ENCODE measurements at regions of chr2 and their contacts with region 1.

Region 1: DNA sequence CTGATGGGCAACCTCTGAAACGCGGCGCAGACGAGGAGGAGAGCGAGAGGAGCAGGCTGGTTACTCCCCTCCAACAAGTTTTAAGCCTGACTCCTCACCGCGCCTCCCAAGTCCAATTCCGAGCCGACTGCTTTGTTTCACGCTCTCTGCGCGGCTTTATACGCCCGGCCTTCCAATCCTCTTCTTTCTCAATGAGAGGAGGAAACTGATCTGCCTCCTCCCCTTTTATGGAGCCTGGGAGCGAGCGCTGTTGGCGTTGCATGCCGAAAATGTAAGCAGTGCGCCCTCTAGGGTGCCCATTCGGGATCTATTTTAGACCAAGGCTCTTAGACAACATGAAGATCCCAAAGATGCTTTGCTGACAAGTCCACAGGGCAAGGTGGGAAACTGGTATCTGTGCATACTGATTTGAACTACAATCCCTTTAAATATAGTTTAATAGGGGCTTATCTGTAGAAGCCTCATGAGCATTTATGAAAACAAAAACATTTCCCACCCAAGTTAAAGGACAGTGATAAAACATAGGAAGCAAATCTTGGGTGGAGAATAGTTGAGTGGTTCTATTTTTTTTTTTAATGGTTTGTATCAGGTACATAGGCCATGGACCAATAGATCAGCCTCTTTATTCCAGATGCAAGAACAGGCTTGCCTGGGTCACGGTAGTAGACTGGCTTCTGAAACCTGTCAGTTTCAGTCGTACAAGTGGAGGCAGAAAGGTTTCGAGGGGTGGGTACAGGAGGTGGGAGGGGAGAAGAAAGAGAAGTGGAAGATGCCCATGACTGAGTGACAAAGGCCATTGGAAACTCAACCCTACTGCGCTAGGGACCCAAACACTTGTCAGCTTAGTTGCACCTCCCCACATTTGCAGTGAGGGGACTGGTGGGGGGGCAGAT is at the start of gene RND3:
- DNase-seq: peak; percentile 99
- H3K4me3 ChIP-seq: peak within 1 kb of the TSS; percentile 67 to 81 (median 78)
- H3K27ac ChIP-seq: peak within 1 kb of the TSS; percentile 90 to 96 (median 90)
- H3K4me1 ChIP-seq: peaks cover 0 to 28% (median 20%) of the 10 kb centered on the region in 4 donors
- H3K27me3 ChIP-seq: no peaks in the 10 kb centered on the region
- CTCF ChIP-seq: peak; percentile 75 to 90 (median 82)
- EP300 ChIP-seq: no peak
- POLR2A ChIP-seq: peak; percentile 89 to 94
- total RNA-seq, gene RND3: 28.9 to 171 (median 30.5) TPM

Region 2: DNA sequence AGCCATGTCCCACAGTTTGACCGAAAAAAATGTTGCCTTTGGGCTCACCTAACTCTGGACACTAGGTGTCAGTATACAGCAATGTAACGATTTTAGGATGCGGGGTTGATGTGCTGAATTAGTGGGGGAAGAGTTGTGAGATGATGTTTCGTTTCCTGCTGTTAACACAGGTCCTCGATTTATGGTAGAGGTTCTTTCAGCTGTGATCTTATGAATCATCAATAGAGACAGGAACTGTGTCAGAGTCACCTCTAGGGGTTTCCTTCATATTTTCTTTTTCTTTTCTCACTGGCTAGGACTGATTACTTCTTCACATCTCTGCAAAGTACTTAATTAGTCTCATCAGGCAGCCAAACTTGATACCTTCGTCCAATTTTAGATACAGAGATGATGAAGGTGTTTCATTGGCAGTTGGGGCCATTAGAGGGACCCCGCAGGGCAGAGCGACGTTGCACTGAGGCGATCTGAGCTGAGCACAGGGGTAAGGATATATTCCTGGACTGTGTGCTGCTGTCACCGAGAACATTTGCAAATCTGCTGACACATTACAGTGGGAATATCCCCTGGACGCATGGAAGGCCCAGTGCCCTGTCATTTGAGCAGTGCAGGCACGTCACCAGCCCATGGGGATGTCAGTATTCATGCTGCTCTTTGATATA is 890.0 kb before region 1 on chr2:
- intact Hi-C with region 1: loop called (anchors 2 kb)
- DNase-seq: peak; percentile 62
- H3K4me3 ChIP-seq: peak overlapping the region in 2 of 4 donors; percentile 20 to 24
- H3K27ac ChIP-seq: no peak overlapping the region
- H3K4me1 ChIP-seq: peaks cover 0 to 4% (median 0%) of the 10 kb centered on the region in 4 donors
- H3K27me3 ChIP-seq: no peaks in the 10 kb centered on the region
- CTCF ChIP-seq: peak; percentile 69 to 78 (median 75)
- EP300 ChIP-seq: no peak
- POLR2A ChIP-seq: no peak

Region 3: GRCh38 chr2:150023044-150023443 is 464.7 kb before region 1 on chr2:
- intact Hi-C with region 1: loop called (anchors 10 kb)
- DNase-seq: no peak
- H3K4me3 ChIP-seq: no peak overlapping the region
- H3K27ac ChIP-seq: no peak overlapping the region
- H3K4me1 ChIP-seq: peaks cover 0 to 5% (median 3%) of the 10 kb centered on the region in 4 donors
- H3K27me3 ChIP-seq: no peaks in the 10 kb centered on the region
- CTCF ChIP-seq: no peak
- EP300 ChIP-seq: no peak
- POLR2A ChIP-seq: no peak

Region 4: DNA sequence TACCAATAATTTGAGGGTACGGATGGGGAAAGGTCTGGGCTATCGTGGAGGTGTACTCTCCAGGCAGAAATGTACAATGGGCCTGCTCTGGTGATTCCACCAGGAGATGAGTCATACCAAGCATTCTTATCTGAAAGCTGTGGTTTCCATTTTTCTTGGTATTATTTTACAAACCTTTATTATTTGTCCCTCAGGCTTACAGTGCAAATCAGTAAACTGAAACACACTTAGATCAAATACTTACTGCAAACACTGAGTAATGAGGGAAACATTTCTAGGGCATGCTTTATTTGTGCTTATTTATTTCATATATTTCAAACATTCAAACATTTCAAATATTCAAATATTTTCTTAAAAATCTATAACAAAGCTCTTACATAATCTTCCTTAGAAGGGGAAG is 320.1 kb before region 1 on chr2:
- intact Hi-C with region 1: loop called (anchors 2 kb)
- DNase-seq: no peak
- H3K4me3 ChIP-seq: no peak overlapping the region
- H3K27ac ChIP-seq: peak overlapping the region in 1 of 4 donors; percentile 60
- H3K4me1 ChIP-seq: peaks cover 0 to 49% (median 43%) of the 10 kb centered on the region in 4 donors
- H3K27me3 ChIP-seq: no peaks in the 10 kb centered on the region
- CTCF ChIP-seq: no peak
- EP300 ChIP-seq: no peak
- POLR2A ChIP-seq: no peak

Region 5: DNA sequence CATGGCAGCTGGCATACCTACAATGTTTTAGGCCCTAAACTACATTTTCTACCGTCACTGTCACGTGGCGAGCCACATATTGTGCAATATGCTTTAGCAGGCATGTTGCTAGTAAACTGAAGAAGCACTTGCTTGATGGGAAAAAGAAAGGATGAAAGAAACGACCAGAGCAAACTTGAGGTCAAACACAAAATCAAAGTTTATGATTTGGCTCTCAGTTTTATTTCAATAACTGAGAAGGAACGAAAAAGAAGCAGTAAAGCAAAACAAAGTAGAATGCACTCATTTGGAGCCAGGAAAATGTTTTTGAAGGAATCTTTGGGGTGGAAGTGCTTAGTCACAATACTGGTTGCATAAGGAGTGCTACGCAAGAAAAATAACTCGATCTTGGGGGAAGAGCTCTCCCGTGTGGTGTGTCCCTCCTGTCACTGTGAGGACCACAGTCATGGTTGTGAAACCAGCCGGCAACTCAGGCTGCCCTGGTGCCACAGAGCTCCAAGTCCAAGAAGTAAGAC is 424.0 kb after region 1 on chr2:
- intact Hi-C with region 1: loop called (anchors 10 kb)
- DNase-seq: peak; percentile 90
- H3K4me3 ChIP-seq: peak overlapping the region in 1 of 4 donors; percentile 11
- H3K27ac ChIP-seq: peak overlapping the region; percentile 41 to 51 (median 46)
- H3K4me1 ChIP-seq: no peaks in the 10 kb centered on the region
- H3K27me3 ChIP-seq: no peaks in the 10 kb centered on the region
- CTCF ChIP-seq: no peak
- EP300 ChIP-seq: peak in 2 of 4 donors; percentile 3 to 45
- POLR2A ChIP-seq: no peak

Region 6: GRCh38 chr2:151238527-151239487 is 751.0 kb after region 1 on chr2:
- intact Hi-C with region 1: loop called (anchors 5 kb)
- DNase-seq: peak; percentile 83
- H3K4me3 ChIP-seq: no peak overlapping the region
- H3K27ac ChIP-seq: no peak overlapping the region
- H3K4me1 ChIP-seq: peaks cover 0 to 7% (median 2%) of the 10 kb centered on the region in 4 donors
- H3K27me3 ChIP-seq: no peaks in the 10 kb centered on the region
- CTCF ChIP-seq: peak; percentile 74 to 85 (median 80)
- EP300 ChIP-seq: no peak
- POLR2A ChIP-seq: no peak